ENCODE measurements at regions of chr7 and their contacts with region 1.

Region 1: GRCh38 chr7:112550468-112551060 is 69.8 kb downstream of the LSMEM1 start:
- DNase-seq: peak in 5 of 14 experiments; percentile 2 to 72 (median 66)
- ATAC-seq: peak; percentile 44
- H3K4me3 ChIP-seq: no peak overlapping the region
- H3K4me3 Mint-ChIP-seq: no peak overlapping the region
- H3K27ac ChIP-seq: no peak overlapping the region
- H3K27ac Mint-ChIP-seq: no peak overlapping the region
- H3K4me1 ChIP-seq: no peaks in the 10 kb centered on the region
- H3K4me1 Mint-ChIP-seq: no peaks in the 10 kb centered on the region
- H3K27me3 ChIP-seq: peaks cover 5 to 8% of the 10 kb centered on the region in 2 experiments
- H3K27me3 Mint-ChIP-seq: peaks cover 14% of the 10 kb centered on the region
- CTCF ChIP-seq: peak; percentile 81

Region 2: GRCh38 chr7:112898432-112899290 is 348.1 kb after region 1 on chr7:
- CTCF ChIA-PET with region 1: interaction called, 5 read pairs
- POLR2A ChIA-PET with region 1: no interaction called
- intact Hi-C with region 1: loop called (anchors 2 to 5 kb)
- DNase-seq: peak in 8 of 14 experiments; percentile 6 to 62 (median 28)
- ATAC-seq: peak; percentile 39
- H3K4me3 ChIP-seq: no peak overlapping the region
- H3K4me3 Mint-ChIP-seq: no peak overlapping the region
- H3K27ac ChIP-seq: no peak overlapping the region
- H3K27ac Mint-ChIP-seq: no peak overlapping the region
- H3K4me1 ChIP-seq: peaks cover 3% of the 10 kb centered on the region
- H3K4me1 Mint-ChIP-seq: peaks cover 18% of the 10 kb centered on the region
- H3K27me3 ChIP-seq: no peaks in the 10 kb centered on the region
- H3K27me3 Mint-ChIP-seq: no peaks in the 10 kb centered on the region
- CTCF ChIP-seq: peak; percentile 51

Region 3: DNA sequence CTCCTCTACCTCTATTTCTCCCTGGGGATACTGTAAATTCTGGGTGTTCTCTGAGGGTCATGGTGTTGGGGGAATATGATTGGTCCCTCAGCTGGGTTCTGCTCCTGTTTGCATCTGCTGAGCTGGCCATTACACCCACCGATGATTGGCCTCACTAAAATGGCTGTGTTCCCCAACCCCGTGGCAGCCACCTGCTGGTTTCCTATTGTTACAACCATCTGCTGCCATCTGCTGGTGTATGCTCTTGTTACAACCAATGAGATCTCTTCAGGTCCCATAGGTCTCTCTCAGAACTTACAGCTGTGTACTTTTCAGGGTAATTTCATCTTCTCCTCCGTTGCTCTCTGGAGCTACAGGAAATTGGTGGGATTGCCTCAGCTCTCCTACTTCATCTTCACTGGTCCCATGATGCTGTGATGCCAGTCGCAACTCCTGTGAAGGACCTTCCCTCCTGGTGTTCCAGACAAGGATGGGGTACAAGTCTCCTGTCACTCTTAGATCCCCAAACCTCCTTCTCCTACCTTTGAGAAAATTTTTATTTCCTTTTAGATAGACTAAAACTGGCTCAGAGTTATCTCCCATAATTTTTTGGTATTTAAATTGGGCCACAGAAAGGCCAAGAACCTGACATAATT is 871.2 kb after region 1 on chr7:
- CTCF ChIA-PET with region 1: interaction called, 13 read pairs
- POLR2A ChIA-PET with region 1: interaction called, 3 read pairs
- intact Hi-C with region 1: loop called in 1 of 2 experiments (anchors 1 kb)
- DNase-seq: peak; percentile 43 to 83 (median 60)
- ATAC-seq: peak; percentile 95
- H3K4me3 ChIP-seq: no peak overlapping the region
- H3K4me3 Mint-ChIP-seq: no peak overlapping the region
- H3K27ac ChIP-seq: no peak overlapping the region
- H3K27ac Mint-ChIP-seq: no peak overlapping the region
- H3K4me1 ChIP-seq: peaks cover 3% of the 10 kb centered on the region
- H3K4me1 Mint-ChIP-seq: no peaks in the 10 kb centered on the region
- H3K27me3 ChIP-seq: no peaks in the 10 kb centered on the region
- H3K27me3 Mint-ChIP-seq: no peaks in the 10 kb centered on the region
- CTCF ChIP-seq: peak; percentile 95

Region 4: GRCh38 chr7:113705439-113705838 is 1154.9 kb after region 1 on chr7:
- CTCF ChIA-PET with region 1: no interaction called
- POLR2A ChIA-PET with region 1: no interaction called
- intact Hi-C with region 1: loop called (anchors 1 to 5 kb)
- DNase-seq: no peak
- ATAC-seq: no peak
- H3K4me3 ChIP-seq: no peak overlapping the region
- H3K4me3 Mint-ChIP-seq: no peak overlapping the region
- H3K27ac ChIP-seq: no peak overlapping the region
- H3K27ac Mint-ChIP-seq: no peak overlapping the region
- H3K4me1 ChIP-seq: no peaks in the 10 kb centered on the region
- H3K4me1 Mint-ChIP-seq: no peaks in the 10 kb centered on the region
- H3K27me3 ChIP-seq: no peaks in the 10 kb centered on the region
- H3K27me3 Mint-ChIP-seq: no peaks in the 10 kb centered on the region
- CTCF ChIP-seq: no peak

Region 5: DNA sequence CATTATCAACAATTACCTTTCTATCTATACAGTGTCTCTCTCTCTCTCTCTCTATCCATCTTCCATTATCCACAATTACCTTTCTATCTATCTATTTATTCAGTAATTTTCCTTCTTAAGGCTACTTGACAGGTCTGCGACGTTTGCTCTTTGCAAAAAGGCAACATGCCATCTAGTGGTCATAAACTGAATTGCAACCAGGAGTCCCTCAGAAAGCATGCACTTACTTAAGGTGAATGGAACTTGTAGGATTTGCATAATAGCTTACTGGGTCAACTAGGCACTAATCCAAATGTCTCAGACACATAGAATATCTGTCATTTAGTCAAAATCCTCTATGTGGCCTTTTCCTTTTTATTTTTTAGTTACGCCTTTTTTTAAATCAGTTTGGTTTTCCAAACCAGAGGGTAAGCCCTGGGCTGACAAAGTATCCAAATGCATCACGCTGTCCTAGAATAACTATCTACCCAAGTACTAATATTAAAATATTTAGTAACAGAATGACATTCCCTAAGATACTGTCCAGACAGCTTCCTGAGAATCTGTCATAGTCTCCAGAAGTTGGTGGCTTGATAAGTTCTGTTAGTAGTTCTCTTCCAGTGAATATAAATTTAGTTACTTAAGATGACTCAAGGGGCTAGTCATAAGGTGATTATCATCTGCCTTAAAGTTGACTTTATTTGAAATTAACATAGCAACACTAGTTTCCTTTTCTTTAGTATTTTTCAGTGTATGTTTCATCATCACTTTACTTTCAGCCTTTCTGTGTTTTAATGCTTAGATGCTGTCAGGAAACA is 1159.9 kb after region 1 on chr7:
- CTCF ChIA-PET with region 1: no interaction called
- POLR2A ChIA-PET with region 1: no interaction called
- intact Hi-C with region 1: loop called (anchors 1 to 5 kb)
- DNase-seq: peak in 8 of 14 experiments; percentile 2 to 74 (median 32)
- ATAC-seq: peak; percentile 57
- H3K4me3 ChIP-seq: no peak overlapping the region
- H3K4me3 Mint-ChIP-seq: no peak overlapping the region
- H3K27ac ChIP-seq: no peak overlapping the region
- H3K27ac Mint-ChIP-seq: no peak overlapping the region
- H3K4me1 ChIP-seq: no peaks in the 10 kb centered on the region
- H3K4me1 Mint-ChIP-seq: no peaks in the 10 kb centered on the region
- H3K27me3 ChIP-seq: no peaks in the 10 kb centered on the region
- H3K27me3 Mint-ChIP-seq: no peaks in the 10 kb centered on the region
- CTCF ChIP-seq: peak; percentile 99

Measured in CD4-positive, alpha-beta T cell (primary cell).